HepG2 (cell line): ENCODE measurements at regions of chr9 and their contacts with region 1.

Region 1: GRCh38 chr9:120714088-120714845 is at the start of gene MEGF9:
- DNase-seq: peak; percentile 92
- ATAC-seq: peak; percentile 95
- H3K4me3 ChIP-seq: peak within 1 kb of the TSS; percentile 79 to 89 (median 85)
- H3K27ac ChIP-seq: no peak within 1 kb of the TSS
- H3K4me1 ChIP-seq: peaks cover 68% of the 10 kb centered on the region
- H3K27me3 ChIP-seq: no peaks in the 10 kb centered on the region
- CTCF ChIP-seq: no peak
- EP300 ChIP-seq: no peak
- POLR2A ChIP-seq: peak; percentile 54 to 69
- RAD21 ChIP-seq: peak; percentile 15
- total RNA-seq, gene MEGF9: 3.1 and 3.3 TPM in 2 replicates

Region 2: GRCh38 chr9:120636194-120636957 is 77.9 kb before region 1 on chr9:
- CTCF ChIA-PET with region 1: no interaction called
- POLR2A ChIA-PET with region 1: no interaction called
- in situ Hi-C with region 1: loop called (anchors 5 kb)
- intact Hi-C with region 1: no loop called
- DNase-seq: no peak
- ATAC-seq: peak; percentile 29; the same call in 1 of the 3 replicates
- H3K4me3 ChIP-seq: no peak overlapping the region; a peak in 1 of 6 replicates
- H3K27ac ChIP-seq: peak overlapping the region; percentile 53
- H3K4me1 ChIP-seq: peaks cover 27% of the 10 kb centered on the region
- H3K27me3 ChIP-seq: no peaks in the 10 kb centered on the region
- CTCF ChIP-seq: no peak
- EP300 ChIP-seq: no peak
- POLR2A ChIP-seq: no peak
- RAD21 ChIP-seq: no peak

Region 3: DNA sequence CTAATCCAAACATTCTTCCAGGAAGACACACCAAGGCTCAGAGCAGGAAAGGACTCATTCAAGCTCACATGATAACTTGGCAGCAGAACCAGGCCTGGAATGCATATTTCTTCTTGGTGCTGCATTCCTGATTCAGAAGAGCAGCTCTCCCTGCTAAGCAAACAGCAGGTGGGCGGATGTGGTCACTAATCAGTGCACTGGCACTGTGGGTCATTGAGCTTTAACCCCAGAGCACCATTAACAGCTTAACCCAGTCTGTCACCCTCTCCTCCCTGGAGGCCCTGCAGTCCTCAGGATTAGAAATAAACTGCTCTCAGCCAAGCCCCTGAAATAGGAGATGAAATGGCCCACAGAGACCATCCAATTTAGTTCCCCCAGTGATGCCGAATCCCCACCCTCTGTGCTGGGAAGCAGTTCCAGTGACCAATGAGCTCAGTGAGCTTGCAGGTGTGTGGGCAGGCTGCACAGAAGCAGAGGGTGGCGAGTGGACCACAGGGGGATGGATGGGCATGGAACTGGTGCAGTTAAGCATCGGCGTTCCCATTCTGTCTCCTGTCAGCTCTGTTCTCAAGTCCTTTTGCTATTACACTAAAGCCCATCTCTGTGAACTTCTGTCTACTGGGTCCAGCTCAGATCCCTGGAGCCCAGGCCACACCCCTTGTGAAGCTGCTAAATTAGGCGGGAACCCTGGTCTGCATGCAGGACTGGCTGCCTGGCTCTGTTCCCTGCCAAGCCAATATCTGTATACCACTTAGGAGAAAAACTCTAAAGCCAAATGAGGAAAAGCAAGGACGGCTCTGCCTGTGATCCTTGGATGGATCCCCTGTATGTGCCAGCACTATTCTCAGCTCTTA is 16.6 kb after region 1 on chr9:
- CTCF ChIA-PET with region 1: no interaction called
- POLR2A ChIA-PET with region 1: interaction called, 37 read pairs
- in situ Hi-C with region 1: no loop called
- intact Hi-C with region 1: loop called (anchors 2 kb)
- DNase-seq: peak; percentile 91
- ATAC-seq: peak; percentile 82
- H3K4me3 ChIP-seq: peak overlapping the region in 1 of 3 experiments; percentile 27; a peak in 1 of 6 replicates
- H3K27ac ChIP-seq: peak overlapping the region; percentile 9
- H3K4me1 ChIP-seq: peaks cover 66% of the 10 kb centered on the region
- H3K27me3 ChIP-seq: no peaks in the 10 kb centered on the region
- CTCF ChIP-seq: no peak
- EP300 ChIP-seq: peak; percentile 68 to 86; a peak in 3 of 4 replicates
- POLR2A ChIP-seq: no peak; a peak in 1 of 4 replicates
- RAD21 ChIP-seq: no peak

Region 4: GRCh38 chr9:120755827-120756434 is 41.7 kb after region 1 on chr9:
- CTCF ChIA-PET with region 1: no interaction called
- POLR2A ChIA-PET with region 1: no interaction called
- in situ Hi-C with region 1: no loop called
- intact Hi-C with region 1: no loop called
- DNase-seq: peak; percentile 39
- ATAC-seq: peak; percentile 79
- H3K4me3 ChIP-seq: no peak overlapping the region
- H3K27ac ChIP-seq: no peak overlapping the region
- H3K4me1 ChIP-seq: no peaks in the 10 kb centered on the region
- H3K27me3 ChIP-seq: no peaks in the 10 kb centered on the region
- CTCF ChIP-seq: peak; percentile 90
- EP300 ChIP-seq: no peak
- POLR2A ChIP-seq: no peak
- RAD21 ChIP-seq: peak; percentile 90